Uterus (tissue), 4 donors: ENCODE measurements at regions of chr2 and their contacts with region 1.

Region 1: DNA sequence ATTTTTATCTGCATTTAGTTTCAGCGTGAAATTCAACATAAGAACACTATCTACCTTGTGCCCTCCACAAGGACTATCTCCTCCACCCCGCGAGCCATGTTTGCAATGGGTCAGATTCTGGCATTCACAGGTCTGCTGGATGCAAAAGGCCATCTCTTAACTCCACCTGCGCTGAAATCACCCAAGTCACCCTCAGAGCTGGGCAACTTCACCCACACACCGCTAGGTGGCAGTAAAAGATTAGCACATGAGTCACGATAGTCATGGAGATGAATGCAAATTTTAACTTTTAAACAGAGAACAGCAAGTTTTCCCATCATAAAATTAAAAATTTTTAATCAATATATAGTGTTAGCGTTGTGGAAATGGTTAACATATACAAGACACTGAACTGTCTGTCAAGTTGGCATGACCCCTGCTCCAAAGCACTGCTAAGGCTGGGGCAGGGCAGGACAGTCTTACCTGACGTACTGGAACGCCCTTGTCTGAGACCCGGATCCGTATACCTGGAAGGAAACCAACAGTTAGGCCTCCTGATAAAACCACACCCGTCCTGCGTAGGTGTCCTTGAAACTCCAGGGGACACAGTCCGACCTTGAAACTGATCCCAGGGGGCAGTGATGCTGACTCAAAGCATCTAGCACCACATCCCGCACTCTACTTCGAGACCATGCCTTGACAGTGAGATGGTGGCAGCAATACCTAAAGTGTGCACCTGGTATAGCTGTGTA is 89.6 kb downstream of the UXS1 start:
- DNase-seq: peak in 1 of 2 donors; percentile 58
- H3K4me3 ChIP-seq: no peak overlapping the region
- H3K27ac ChIP-seq: no peak overlapping the region
- H3K4me1 ChIP-seq: no peaks in the 10 kb centered on the region
- H3K27me3 ChIP-seq: no peaks in the 10 kb centered on the region
- CTCF ChIP-seq: peak; percentile 85 to 96 (median 87)
- POLR2A ChIP-seq: no peak

Region 2: GRCh38 chr2:105999211-105999989 is 105.1 kb before region 1 on chr2:
- intact Hi-C with region 1: no loop called
- DNase-seq: no peak
- H3K4me3 ChIP-seq: no peak overlapping the region
- H3K27ac ChIP-seq: no peak overlapping the region
- H3K4me1 ChIP-seq: no peaks in the 10 kb centered on the region
- H3K27me3 ChIP-seq: no peaks in the 10 kb centered on the region
- CTCF ChIP-seq: no peak
- POLR2A ChIP-seq: no peak

Region 3: GRCh38 chr2:106073678-106074406 is 30.7 kb before region 1 on chr2:
- intact Hi-C with region 1: no loop called
- DNase-seq: no peak
- H3K4me3 ChIP-seq: no peak overlapping the region
- H3K27ac ChIP-seq: no peak overlapping the region
- H3K4me1 ChIP-seq: no peaks in the 10 kb centered on the region
- H3K27me3 ChIP-seq: no peaks in the 10 kb centered on the region
- CTCF ChIP-seq: no peak
- POLR2A ChIP-seq: no peak

Region 4: GRCh38 chr2:106542811-106543259 is 438.3 kb after region 1 on chr2:
- intact Hi-C with region 1: loop called (anchors 10 kb)
- DNase-seq: peak; percentile 54 to 74
- H3K4me3 ChIP-seq: peak overlapping the region in 1 of 2 donors; percentile 27
- H3K27ac ChIP-seq: no peak overlapping the region
- H3K4me1 ChIP-seq: no peaks in the 10 kb centered on the region
- H3K27me3 ChIP-seq: no peaks in the 10 kb centered on the region
- CTCF ChIP-seq: peak; percentile 80 to 94 (median 85)
- POLR2A ChIP-seq: no peak

Region 5: GRCh38 chr2:106582148-106583143 is 477.9 kb after region 1 on chr2:
- intact Hi-C with region 1: loop called (anchors 10 kb)
- DNase-seq: peak; percentile 80 to 84
- H3K4me3 ChIP-seq: peak overlapping the region; percentile 18 to 29
- H3K27ac ChIP-seq: peak overlapping the region; percentile 49 to 53
- H3K4me1 ChIP-seq: no peaks in the 10 kb centered on the region
- H3K27me3 ChIP-seq: no peaks in the 10 kb centered on the region
- CTCF ChIP-seq: peak; percentile 79 to 87 (median 84)
- POLR2A ChIP-seq: no peak